Activated naive CD4-positive, alpha-beta T cell treated with anti-CD3 and anti-CD28 coated beads for 36 hours (primary cell): ENCODE measurements at regions of chr1 and their contacts with region 1.

Region 1: GRCh38 chr1:198416296-198416695 is 124.2 kb downstream of the ATP6V1G3 start:
- DNase-seq: no peak
- H3K4me3 Mint-ChIP-seq: no peak overlapping the region
- H3K27ac Mint-ChIP-seq: no peak overlapping the region
- H3K4me1 Mint-ChIP-seq: no peaks in the 10 kb centered on the region
- H3K27me3 Mint-ChIP-seq: peaks cover 5% of the 10 kb centered on the region

Region 2: DNA sequence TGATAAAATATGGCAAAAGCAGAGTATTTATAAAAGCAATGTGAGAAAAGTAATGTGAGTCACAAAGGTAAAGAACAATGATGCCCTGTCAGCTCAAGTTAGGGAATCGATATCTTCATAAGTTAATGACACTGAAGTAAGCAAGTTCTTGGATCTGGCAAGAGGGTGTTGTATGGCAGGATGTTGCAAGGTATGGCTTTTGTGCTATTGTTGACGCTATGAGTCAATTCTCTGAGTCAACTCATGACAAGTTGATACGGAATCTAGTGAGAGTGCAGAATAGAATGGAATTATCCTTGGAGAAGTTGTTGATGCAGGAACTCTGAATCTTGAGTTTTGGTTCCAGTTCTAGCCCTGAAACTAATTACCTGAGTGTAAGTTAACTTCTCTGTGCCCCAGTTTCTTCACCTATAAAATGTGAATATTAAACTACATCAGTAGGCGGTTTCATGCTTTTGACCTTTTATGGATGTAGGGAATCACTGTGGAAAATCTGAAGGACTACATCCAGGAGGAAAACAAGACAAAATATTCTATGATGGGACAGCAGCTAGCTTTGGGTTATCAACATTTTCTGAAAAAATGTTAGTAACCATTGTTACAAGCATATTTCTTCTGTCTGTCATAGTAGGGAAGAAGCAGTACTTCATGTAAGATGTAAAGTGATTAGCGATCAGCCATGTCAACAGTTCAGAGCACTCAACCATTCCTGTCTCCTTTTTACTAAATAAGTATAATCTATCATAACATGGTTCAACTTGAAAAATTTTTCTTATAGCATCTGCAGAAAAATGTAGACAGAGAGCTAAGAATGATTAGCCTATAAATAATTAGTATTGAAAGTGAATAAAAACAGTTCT is 27.3 kb after region 1 on chr1:
- CTCF ChIA-PET with region 1: no interaction called
- intact Hi-C with region 1: loop called (anchors 2 kb)
- DNase-seq: no peak
- H3K4me3 Mint-ChIP-seq: no peak overlapping the region
- H3K27ac Mint-ChIP-seq: no peak overlapping the region
- H3K4me1 Mint-ChIP-seq: no peaks in the 10 kb centered on the region
- H3K27me3 Mint-ChIP-seq: no peaks in the 10 kb centered on the region

Region 3: GRCh38 chr1:198638894-198639635 is 222.8 kb after region 1 on chr1 and contains the start of gene PTPRC:
- CTCF ChIA-PET with region 1: no interaction called
- intact Hi-C with region 1: no loop called
- DNase-seq: no peak
- H3K4me3 Mint-ChIP-seq: peak within 1 kb of the TSS; percentile 92
- H3K27ac Mint-ChIP-seq: peak within 1 kb of the TSS; percentile 100
- H3K4me1 Mint-ChIP-seq: peaks cover 54% of the 10 kb centered on the region
- H3K27me3 Mint-ChIP-seq: no peaks in the 10 kb centered on the region
- total RNA-seq, gene PTPRC: 689 to 714 TPM